Activated CD4-positive, alpha-beta T cell treated with anti-CD3 and anti-CD28 coated beads for 36 hours (primary cell): ENCODE measurements at regions of chr20 and their contacts with region 1.

Region 1: GRCh38 chr20:21099751-21100577 is 6.2 kb downstream of the LINC00237 start:
- DNase-seq: peak; percentile 71
- ATAC-seq: peak; percentile 53
- H3K4me3 Mint-ChIP-seq: peak overlapping the region; percentile 78
- H3K27ac Mint-ChIP-seq: peak overlapping the region; percentile 92
- H3K4me1 Mint-ChIP-seq: peaks cover 34% of the 10 kb centered on the region
- H3K27me3 Mint-ChIP-seq: peaks cover 68% of the 10 kb centered on the region

Region 2: DNA sequence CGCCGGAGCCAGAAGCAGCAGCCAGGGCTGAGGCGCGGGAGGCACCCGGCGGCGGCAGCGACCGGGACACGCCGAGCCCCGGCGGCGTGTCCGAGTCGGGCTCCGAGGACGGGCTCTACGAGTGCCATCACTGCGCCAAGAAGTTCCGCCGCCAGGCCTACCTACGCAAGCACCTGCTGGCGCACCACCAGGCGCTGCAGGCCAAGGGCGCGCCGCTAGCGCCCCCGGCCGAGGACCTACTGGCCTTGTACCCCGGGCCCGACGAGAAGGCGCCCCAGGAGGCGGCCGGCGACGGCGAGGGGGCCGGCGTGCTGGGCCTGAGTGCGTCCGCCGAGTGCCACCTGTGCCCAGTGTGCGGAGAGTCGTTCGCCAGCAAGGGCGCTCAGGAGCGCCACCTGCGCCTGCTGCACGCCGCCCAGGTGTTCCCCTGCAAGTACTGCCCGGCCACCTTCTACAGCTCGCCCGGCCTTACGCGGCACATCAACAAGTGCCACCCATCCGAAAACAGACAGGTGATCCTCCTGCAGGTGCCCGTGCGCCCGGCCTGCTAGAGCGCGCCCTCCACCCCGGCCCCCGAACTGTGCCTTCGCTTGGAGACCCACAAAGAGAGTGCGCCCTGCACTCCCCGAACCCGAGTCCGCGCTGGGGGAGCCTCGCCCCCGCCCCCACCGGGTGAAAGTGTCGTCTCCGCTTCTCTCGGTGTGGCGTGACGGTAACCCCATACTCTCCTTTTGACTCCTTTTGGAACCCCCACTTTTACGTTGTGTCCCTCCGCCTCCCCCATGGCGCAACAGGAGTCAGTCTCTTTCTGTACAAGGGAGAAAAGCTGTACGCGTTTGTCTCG is 730.5 kb before region 1 on chr20:
- CTCF ChIA-PET with region 1: no interaction called
- POLR2A ChIA-PET with region 1: no interaction called
- intact Hi-C with region 1: loop called (anchors 5 to 10 kb)
- DNase-seq: peak; percentile 59
- ATAC-seq: peak; percentile 10
- H3K4me3 Mint-ChIP-seq: peak overlapping the region; percentile 77
- H3K27ac Mint-ChIP-seq: peak overlapping the region; percentile 64
- H3K4me1 Mint-ChIP-seq: peaks cover 24% of the 10 kb centered on the region
- H3K27me3 Mint-ChIP-seq: peaks cover 56% of the 10 kb centered on the region

Region 3: GRCh38 chr20:20837574-20838021 is 262.4 kb before region 1 on chr20:
- CTCF ChIA-PET with region 1: no interaction called
- POLR2A ChIA-PET with region 1: no interaction called
- intact Hi-C with region 1: no loop called
- DNase-seq: peak; percentile 74
- ATAC-seq: no peak
- H3K4me3 Mint-ChIP-seq: no peak overlapping the region
- H3K27ac Mint-ChIP-seq: no peak overlapping the region
- H3K4me1 Mint-ChIP-seq: peaks cover 3% of the 10 kb centered on the region
- H3K27me3 Mint-ChIP-seq: peaks cover 8% of the 10 kb centered on the region

Region 4: GRCh38 chr20:20856306-20856705 is 243.7 kb before region 1 on chr20:
- CTCF ChIA-PET with region 1: no interaction called
- POLR2A ChIA-PET with region 1: no interaction called
- intact Hi-C with region 1: no loop called
- DNase-seq: no peak
- ATAC-seq: no peak
- H3K4me3 Mint-ChIP-seq: no peak overlapping the region
- H3K27ac Mint-ChIP-seq: no peak overlapping the region
- H3K4me1 Mint-ChIP-seq: no peaks in the 10 kb centered on the region
- H3K27me3 Mint-ChIP-seq: peaks cover 18% of the 10 kb centered on the region

Region 5: GRCh38 chr20:21125849-21126580 is 26.1 kb after region 1 on chr20 and contains the start of gene KIZ:
- CTCF ChIA-PET with region 1: interaction called, 5 read pairs
- POLR2A ChIA-PET with region 1: interaction called, 3 read pairs
- intact Hi-C with region 1: loop called (anchors 1 to 2 kb)
- DNase-seq: peak; percentile 99
- ATAC-seq: peak; percentile 97
- H3K4me3 Mint-ChIP-seq: peak within 1 kb of the TSS; percentile 95
- H3K27ac Mint-ChIP-seq: peak within 1 kb of the TSS; percentile 86
- H3K4me1 Mint-ChIP-seq: peaks cover 18% of the 10 kb centered on the region
- H3K27me3 Mint-ChIP-seq: no peaks in the 10 kb centered on the region
- total RNA-seq, gene KIZ: 13.2 to 15.2 TPM

Region 6: DNA sequence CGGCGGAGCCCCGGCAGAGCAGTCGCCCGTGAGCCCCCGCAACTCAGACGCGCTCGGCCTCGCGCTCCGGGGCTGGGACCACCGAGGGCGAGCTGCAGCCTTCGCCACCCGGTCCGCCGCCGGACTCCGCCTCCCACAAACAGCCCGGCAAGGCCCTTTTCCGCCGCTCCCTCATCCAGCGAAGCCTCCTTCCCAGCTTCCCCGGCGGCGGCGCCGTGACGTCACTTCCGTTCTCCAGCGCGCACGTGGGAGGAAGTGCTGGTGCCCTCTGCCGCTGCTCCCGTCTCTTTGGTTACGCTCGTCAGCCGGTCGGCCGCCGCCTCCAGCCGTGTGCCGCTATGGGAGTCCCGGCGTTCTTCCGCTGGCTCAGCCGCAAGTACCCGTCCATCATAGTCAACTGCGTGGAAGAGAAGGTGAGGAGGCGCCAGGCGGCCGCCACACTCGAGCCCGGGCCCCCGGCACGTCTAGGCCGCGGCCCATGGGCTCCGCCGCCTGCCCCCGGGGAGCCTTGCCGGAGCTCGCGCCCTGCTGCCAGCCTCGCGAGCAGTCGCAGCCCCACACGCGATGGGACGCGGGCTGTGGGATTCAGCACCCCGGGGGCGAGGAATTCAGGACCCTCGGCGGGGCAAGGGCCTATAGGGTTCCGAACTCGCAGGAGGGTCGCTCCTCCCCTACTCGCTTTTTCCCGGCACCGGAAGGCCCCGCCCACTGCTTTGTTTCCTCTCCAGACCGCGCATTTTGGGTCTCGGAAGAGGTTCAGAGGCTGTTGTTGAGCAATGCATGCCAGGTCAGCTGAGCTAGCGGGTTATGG is 203.3 kb after region 1 on chr20 and contains the start of gene XRN2:
- CTCF ChIA-PET with region 1: no interaction called
- POLR2A ChIA-PET with region 1: no interaction called
- intact Hi-C with region 1: loop called in 1 of 2 experiments (anchors 1 kb)
- DNase-seq: peak; percentile 98
- ATAC-seq: peak; percentile 85
- H3K4me3 Mint-ChIP-seq: peak within 1 kb of the TSS; percentile 93
- H3K27ac Mint-ChIP-seq: peak within 1 kb of the TSS; percentile 98
- H3K4me1 Mint-ChIP-seq: peaks cover 31% of the 10 kb centered on the region
- H3K27me3 Mint-ChIP-seq: no peaks in the 10 kb centered on the region
- total RNA-seq, gene XRN2: 87.1 to 88.4 TPM

Region 7: DNA sequence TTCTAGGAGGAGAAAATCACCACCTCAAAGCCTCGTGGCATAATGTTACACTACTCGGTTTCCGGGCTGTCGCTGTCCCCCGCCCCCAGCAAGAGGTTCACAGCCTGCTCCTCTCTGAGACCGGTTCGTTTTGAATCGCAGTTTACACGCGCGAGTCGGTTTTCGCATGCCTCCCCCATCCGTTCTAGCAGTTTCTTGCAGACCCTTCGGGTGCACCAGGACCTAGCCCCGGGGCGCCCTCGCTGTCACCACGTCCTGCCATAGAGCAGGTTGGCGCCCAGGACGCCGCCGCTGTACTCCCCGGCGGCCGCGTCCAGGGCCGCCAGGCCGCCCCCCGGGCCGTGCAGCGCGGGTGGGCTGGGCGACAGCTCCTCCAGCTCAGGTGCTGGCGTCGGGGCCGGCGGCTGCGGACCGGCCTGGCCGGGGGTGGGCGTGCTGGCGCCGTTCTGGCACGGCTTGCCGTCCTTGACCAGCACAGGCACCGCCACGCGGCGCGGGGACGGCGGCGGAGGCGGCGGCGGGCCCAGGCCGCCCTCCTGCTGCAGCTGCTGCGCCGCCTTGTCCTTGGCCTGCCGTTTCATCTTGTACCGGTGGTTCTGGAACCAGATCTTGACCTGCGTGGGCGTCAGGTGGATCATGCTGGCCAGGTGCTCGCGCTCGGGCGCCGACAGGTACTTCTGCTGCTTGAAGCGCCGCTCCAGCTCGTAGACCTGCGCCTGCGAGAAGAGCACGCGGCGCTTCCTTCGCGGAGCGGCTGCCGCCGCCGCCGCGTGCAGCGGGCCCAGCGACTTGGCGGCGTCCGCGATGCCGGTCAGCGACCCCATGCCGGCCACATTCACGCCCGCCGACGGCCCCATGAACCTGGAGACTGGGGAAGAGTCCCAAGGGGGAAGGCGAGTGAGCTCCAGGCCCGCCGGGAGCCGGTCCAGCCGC is 296.0 kb after region 1 on chr20:
- CTCF ChIA-PET with region 1: no interaction called
- POLR2A ChIA-PET with region 1: no interaction called
- intact Hi-C with region 1: loop called (anchors 1 to 5 kb)
- DNase-seq: peak; percentile 67
- ATAC-seq: peak; percentile 76
- H3K4me3 Mint-ChIP-seq: peak overlapping the region; percentile 40
- H3K27ac Mint-ChIP-seq: no peak overlapping the region
- H3K4me1 Mint-ChIP-seq: peaks cover 24% of the 10 kb centered on the region
- H3K27me3 Mint-ChIP-seq: peaks cover 62% of the 10 kb centered on the region

Region 8: GRCh38 chr20:21702553-21703470 is 602.8 kb after region 1 on chr20:
- CTCF ChIA-PET with region 1: no interaction called
- POLR2A ChIA-PET with region 1: no interaction called
- intact Hi-C with region 1: loop called (anchors 5 kb)
- DNase-seq: peak; percentile 80
- ATAC-seq: peak; percentile 55
- H3K4me3 Mint-ChIP-seq: no peak overlapping the region
- H3K27ac Mint-ChIP-seq: no peak overlapping the region
- H3K4me1 Mint-ChIP-seq: no peaks in the 10 kb centered on the region
- H3K27me3 Mint-ChIP-seq: peaks cover 78% of the 10 kb centered on the region

Region 9: GRCh38 chr20:22575087-22575721 is 1475.2 kb after region 1 on chr20:
- CTCF ChIA-PET with region 1: no interaction called
- POLR2A ChIA-PET with region 1: no interaction called
- intact Hi-C with region 1: loop called (anchors 5 to 10 kb)
- DNase-seq: no peak
- ATAC-seq: no peak
- H3K4me3 Mint-ChIP-seq: no peak overlapping the region
- H3K27ac Mint-ChIP-seq: no peak overlapping the region
- H3K4me1 Mint-ChIP-seq: no peaks in the 10 kb centered on the region
- H3K27me3 Mint-ChIP-seq: peaks cover 69% of the 10 kb centered on the region